Heart left ventricle (tissue), 16 donors: ENCODE measurements at regions of chr1 and their contacts with region 1.

Region 1: GRCh38 chr1:32215629-32216480 is 6.3 kb downstream of the TMEM234 start:
- DNase-seq: peak in 4 of 5 donors; percentile 46 to 54 (median 52)
- ATAC-seq: peak; percentile 28 to 84 (median 80)
- H3K4me3 ChIP-seq: no peak overlapping the region
- H3K27ac ChIP-seq: peak overlapping the region in 6 of 12 donors; percentile 0 to 52 (median 16)
- H3K4me1 ChIP-seq: peaks cover 0 to 20% (median 2%) of the 10 kb centered on the region in 12 donors
- H3K27me3 ChIP-seq: no peaks in the 10 kb centered on the region
- CTCF ChIP-seq: peak; percentile 64 to 83 (median 75)
- POLR2A ChIP-seq: no peak

Region 2: GRCh38 chr1:32299327-32299726 is 83.5 kb after region 1 on chr1:
- intact Hi-C with region 1: loop called in 2 of 10 experiments (anchors 5 kb)
- DNase-seq: no peak
- ATAC-seq: no peak
- H3K4me3 ChIP-seq: no peak overlapping the region
- H3K27ac ChIP-seq: no peak overlapping the region
- H3K4me1 ChIP-seq: peaks cover 0 to 8% (median 0%) of the 10 kb centered on the region in 12 donors
- H3K27me3 ChIP-seq: no peaks in the 10 kb centered on the region
- CTCF ChIP-seq: no peak
- POLR2A ChIP-seq: no peak

Region 3: DNA sequence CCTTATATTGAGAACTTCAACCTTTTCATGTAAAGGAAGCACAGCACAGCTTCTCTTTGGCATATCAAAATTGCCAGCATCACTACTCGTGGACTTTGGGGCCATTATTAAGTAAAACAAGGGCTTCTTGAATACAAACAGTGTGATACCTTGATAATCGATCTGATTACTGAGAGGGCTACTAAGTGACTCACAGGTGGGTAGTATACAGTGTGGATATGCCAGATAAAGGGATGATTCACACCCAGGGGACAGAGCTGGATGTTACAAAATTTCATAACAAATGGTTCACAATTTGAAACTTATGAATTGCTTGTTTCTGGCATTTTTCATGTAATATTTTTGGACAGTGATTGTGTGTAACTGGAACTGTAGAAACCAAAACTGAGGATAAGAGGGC is 91.5 kb after region 1 on chr1:
- intact Hi-C with region 1: loop called in 2 of 10 experiments (anchors 5 to 10 kb)
- DNase-seq: no peak
- ATAC-seq: no peak
- H3K4me3 ChIP-seq: no peak overlapping the region
- H3K27ac ChIP-seq: no peak overlapping the region
- H3K4me1 ChIP-seq: peaks cover 0 to 7% (median 0%) of the 10 kb centered on the region in 12 donors
- H3K27me3 ChIP-seq: no peaks in the 10 kb centered on the region
- CTCF ChIP-seq: no peak
- POLR2A ChIP-seq: no peak

Region 4: DNA sequence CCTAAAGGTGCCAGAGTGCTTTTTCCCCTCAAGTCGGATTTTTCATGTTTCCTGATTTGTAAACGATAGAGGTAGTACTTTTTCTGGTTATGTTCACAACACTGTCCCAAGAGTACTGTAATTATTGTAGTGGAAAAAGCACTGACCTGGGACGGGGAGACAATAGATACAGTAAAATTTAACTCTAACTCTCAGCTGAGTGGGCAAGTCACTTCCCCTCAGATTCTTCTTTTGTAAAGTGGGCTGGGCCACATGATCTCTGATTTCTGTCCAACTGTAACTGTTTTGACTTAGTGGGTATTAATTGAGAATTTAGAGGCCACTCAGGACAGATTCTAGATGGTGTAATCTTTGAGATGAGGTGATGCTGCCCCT is 101.0 kb after region 1 on chr1:
- intact Hi-C with region 1: loop called in 6 of 10 experiments (anchors 2 to 10 kb)
- DNase-seq: no peak
- ATAC-seq: no peak
- H3K4me3 ChIP-seq: no peak overlapping the region
- H3K27ac ChIP-seq: no peak overlapping the region
- H3K4me1 ChIP-seq: peaks cover 0 to 14% (median 6%) of the 10 kb centered on the region in 12 donors
- H3K27me3 ChIP-seq: no peaks in the 10 kb centered on the region
- CTCF ChIP-seq: no peak
- POLR2A ChIP-seq: no peak

Region 5: DNA sequence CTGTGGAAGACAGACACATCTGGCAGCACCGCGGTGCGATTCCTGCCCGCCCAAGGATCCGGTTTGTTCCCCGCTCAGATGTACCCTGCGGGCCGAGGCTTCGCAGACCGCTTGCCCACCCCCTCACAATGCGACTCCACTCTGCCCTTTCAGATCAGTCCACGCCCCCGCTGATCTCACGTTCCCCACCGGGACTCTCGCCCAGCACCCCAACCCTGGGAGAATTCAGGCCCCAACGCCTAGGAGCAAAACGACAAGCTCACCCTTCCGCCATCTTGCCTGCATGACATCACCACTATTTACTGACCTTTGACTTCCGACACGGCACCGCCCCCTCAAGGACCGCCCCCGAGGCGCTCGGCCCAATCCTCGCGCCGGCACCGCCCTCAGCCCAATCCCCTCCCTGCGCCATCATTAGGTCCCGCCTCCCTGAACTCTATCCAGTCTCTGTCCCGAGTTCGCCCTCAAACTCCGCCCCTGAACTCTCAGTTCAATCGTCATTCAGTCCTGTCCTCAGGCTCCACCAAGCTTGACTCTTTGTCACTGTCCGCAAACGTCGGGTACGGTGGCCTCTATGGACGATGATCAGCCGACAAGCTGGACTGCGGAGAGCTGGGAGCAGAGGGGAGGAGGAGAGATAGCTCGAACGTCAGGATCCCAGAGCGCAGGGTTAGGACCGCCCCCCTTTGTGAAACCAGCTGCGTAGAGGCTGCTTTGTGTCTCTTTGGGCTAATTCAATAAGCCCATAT is 178.5 kb after region 1 on chr1 and contains the start of gene BSDC1:
- intact Hi-C with region 1: loop called in 4 of 10 experiments (anchors 10 kb)
- DNase-seq: peak; percentile 98 to 99 (median 99)
- ATAC-seq: peak; percentile 98 to 100 (median 98)
- H3K4me3 ChIP-seq: peak within 1 kb of the TSS; percentile 64 to 98 (median 92)
- H3K27ac ChIP-seq: peak within 1 kb of the TSS; percentile 86 to 97 (median 90)
- H3K4me1 ChIP-seq: peaks cover 7 to 50% (median 31%) of the 10 kb centered on the region in 12 donors
- H3K27me3 ChIP-seq: no peaks in the 10 kb centered on the region
- CTCF ChIP-seq: no peak
- POLR2A ChIP-seq: peak; percentile 81 to 90
- total RNA-seq, gene BSDC1: 35.6 to 53.2 (median 44.5) TPM

Region 6: DNA sequence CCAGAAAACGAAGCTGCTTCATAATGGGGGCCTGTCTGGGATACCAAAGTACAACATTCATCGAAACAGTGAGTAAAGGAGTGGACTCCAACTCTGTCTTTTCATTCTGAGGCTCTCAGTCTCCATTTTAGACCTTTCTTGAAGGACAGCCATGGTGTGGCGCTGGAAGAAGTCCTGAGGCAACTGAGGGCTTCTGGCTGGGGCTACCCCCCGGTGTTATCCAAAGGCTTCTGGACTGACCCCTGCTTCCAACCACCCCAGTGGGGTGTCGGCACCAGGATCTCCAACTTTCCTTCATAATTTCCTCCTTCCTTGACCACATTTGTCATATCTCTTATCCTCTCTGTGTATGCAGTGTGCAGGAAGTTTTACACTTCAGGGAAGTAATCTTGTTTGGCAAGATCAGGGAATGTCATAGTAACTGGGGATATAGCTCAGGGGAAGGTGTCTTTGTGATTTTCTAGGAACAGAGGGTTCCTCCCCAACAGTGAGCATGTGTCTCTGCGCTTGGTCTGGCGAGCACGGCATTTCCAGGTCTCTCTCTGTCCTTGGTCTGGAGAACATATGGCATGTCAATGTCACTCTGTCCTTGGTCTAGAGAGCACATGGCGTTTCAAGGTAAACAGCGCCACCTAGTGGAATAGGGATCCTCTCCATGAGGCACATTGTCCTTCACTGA is 197.8 kb after region 1 on chr1:
- intact Hi-C with region 1: loop called in 3 of 10 experiments (anchors 2 to 5 kb)
- DNase-seq: peak in 4 of 5 donors; percentile 39 to 63 (median 54)
- ATAC-seq: peak; percentile 61 to 76 (median 74)
- H3K4me3 ChIP-seq: no peak overlapping the region
- H3K27ac ChIP-seq: no peak overlapping the region
- H3K4me1 ChIP-seq: no peaks in the 10 kb centered on the region
- H3K27me3 ChIP-seq: no peaks in the 10 kb centered on the region
- CTCF ChIP-seq: peak; percentile 57 to 85 (median 76)
- POLR2A ChIP-seq: no peak